ENCODE measurements at regions of chr2 and their contacts with region 1.

Region 1: GRCh38 chr2:11876436-11876835 is 130.0 kb downstream of the LPIN1 start:
- DNase-seq: no peak
- H3K4me3 ChIP-seq: no peak overlapping the region
- H3K27ac ChIP-seq: no peak overlapping the region
- H3K4me1 ChIP-seq: no peaks in the 10 kb centered on the region
- H3K27me3 ChIP-seq: no peaks in the 10 kb centered on the region
- CTCF ChIP-seq: no peak
- POLR2A ChIP-seq: no peak

Region 2: DNA sequence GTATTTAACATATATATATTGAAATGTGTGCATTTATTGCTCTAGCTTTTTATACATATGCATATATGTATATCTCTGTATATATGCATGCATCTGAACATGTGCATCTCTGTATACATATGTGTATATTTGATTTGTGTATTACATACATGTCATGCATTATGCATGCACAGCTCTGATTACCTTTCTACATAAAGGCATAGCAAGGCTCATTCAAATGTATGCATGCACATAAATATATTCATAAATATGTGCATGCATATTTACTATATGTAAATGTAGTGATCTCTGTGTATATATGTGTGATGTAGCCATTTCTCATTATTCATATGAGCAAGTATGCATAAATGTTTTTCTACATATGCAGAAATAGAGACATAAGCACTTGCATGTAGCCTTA is 904.9 kb after region 1 on chr2:
- intact Hi-C with region 1: loop called (anchors 5 kb)
- DNase-seq: no peak
- H3K4me3 ChIP-seq: no peak overlapping the region
- H3K27ac ChIP-seq: no peak overlapping the region
- H3K4me1 ChIP-seq: no peaks in the 10 kb centered on the region
- H3K27me3 ChIP-seq: no peaks in the 10 kb centered on the region
- CTCF ChIP-seq: no peak
- POLR2A ChIP-seq: no peak